B cell (primary cell): ENCODE measurements at regions of chr12 and their contacts with region 1.

Region 1: DNA sequence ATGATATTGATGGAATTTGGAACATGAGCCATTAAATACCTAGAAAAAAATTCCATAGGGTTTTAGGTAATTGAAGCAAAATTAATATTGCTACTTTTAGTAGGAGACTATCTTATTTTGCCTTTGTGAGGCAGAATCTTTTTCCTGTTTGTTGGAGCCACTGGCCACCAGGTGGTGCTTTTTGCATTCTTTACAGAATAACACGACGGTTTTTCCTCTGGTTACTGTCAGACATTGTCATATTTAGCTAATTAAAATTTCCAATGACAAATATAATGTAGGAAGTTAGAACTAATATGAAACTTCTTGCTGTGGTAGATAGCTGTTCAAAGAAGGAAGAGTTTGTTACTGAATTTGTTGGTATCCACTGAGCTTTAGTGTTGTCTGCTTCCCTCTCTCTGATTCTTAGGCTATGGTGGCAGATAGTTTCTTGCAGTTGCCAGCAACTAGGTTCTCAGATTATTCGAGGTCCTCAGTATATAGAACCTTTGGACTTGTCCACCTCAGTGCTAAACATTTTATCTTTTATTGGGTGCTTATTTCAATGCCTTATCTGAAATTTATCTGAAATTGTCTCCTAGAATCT is 25.7 kb downstream of the RAB21 start:
- DNase-seq: peak; percentile 60
- ATAC-seq: peak; percentile 28
- H3K4me3 ChIP-seq: no peak overlapping the region
- H3K4me3 Mint-ChIP-seq: no peak overlapping the region
- H3K27ac ChIP-seq: peak overlapping the region in 1 of 2 donors; percentile 49
- H3K27ac Mint-ChIP-seq: no peak overlapping the region
- H3K4me1 ChIP-seq: peaks cover 6 to 13% of the 10 kb centered on the region in 2 donors
- H3K4me1 Mint-ChIP-seq: peaks cover 13% of the 10 kb centered on the region
- H3K27me3 ChIP-seq: no peaks in the 10 kb centered on the region
- H3K27me3 Mint-ChIP-seq: no peaks in the 10 kb centered on the region
- CTCF ChIP-seq: peak; percentile 83

Region 2: DNA sequence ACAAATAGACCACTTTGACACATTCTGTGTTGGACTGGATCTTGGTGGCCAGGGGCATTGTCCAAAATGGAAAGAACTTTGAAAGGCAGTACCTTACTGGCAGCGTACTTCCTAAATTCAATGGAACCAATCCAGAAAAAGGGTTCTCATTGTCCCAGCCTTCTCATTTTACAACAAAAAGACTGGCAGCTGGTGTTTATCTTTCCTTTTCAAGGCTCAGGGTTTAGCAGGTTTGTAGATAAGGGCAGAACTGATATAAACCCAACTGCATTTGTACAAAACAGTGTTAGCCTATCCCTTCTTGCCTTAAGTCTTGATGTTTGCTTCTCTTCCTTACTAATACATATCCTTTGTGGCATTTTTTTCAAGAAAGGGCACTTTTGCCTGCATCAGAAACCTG is 108.5 kb before region 1 on chr12:
- CTCF ChIA-PET with region 1: no interaction called
- POLR2A ChIA-PET with region 1: no interaction called
- intact Hi-C with region 1: no loop called
- DNase-seq: no peak
- ATAC-seq: no peak
- H3K4me3 ChIP-seq: no peak overlapping the region
- H3K4me3 Mint-ChIP-seq: no peak overlapping the region
- H3K27ac ChIP-seq: no peak overlapping the region
- H3K27ac Mint-ChIP-seq: no peak overlapping the region
- H3K4me1 ChIP-seq: no peaks in the 10 kb centered on the region
- H3K4me1 Mint-ChIP-seq: peaks cover 9% of the 10 kb centered on the region
- H3K27me3 ChIP-seq: no peaks in the 10 kb centered on the region
- H3K27me3 Mint-ChIP-seq: no peaks in the 10 kb centered on the region
- CTCF ChIP-seq: no peak

Region 3: GRCh38 chr12:71791473-71792150 is 11.3 kb after region 1 on chr12:
- CTCF ChIA-PET with region 1: interaction called, 10 read pairs
- POLR2A ChIA-PET with region 1: no interaction called
- intact Hi-C with region 1: no loop called
- DNase-seq: no peak
- ATAC-seq: no peak
- H3K4me3 ChIP-seq: no peak overlapping the region
- H3K4me3 Mint-ChIP-seq: no peak overlapping the region
- H3K27ac ChIP-seq: no peak overlapping the region
- H3K27ac Mint-ChIP-seq: no peak overlapping the region
- H3K4me1 ChIP-seq: no peaks in the 10 kb centered on the region
- H3K4me1 Mint-ChIP-seq: peaks cover 6% of the 10 kb centered on the region
- H3K27me3 ChIP-seq: no peaks in the 10 kb centered on the region
- H3K27me3 Mint-ChIP-seq: no peaks in the 10 kb centered on the region
- CTCF ChIP-seq: no peak

Region 4: DNA sequence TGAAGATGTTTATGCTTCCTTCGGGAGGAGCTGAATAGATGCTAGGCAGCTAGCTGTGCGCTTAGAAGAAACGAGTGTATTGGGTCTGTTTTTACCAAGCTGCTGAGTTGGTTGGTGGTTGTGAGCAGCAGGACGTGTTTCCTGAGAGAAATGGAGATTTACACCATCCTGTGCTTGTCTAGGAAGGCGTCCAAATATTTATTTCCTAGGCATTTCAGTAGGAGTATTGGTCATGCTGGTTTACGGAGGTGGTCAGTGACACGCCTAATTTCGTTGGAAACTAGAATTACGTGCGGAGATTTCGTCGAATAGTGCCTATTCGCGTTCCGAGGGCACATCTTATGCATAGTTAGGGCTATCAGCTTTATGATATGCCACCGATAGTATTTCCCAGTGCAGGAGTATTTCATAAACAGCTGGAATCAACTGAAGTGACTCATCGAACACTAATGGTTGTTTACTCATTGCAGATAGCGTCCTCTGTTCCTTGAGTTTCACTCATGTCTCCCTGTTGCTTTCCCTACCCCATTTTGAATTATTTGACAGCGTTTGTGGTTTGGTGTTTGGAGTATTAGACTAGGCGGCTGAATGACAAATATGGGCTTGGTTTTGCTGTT is 60.0 kb after region 1 on chr12:
- CTCF ChIA-PET with region 1: interaction called, 22 read pairs
- POLR2A ChIA-PET with region 1: no interaction called
- intact Hi-C with region 1: no loop called
- DNase-seq: no peak
- ATAC-seq: no peak
- H3K4me3 ChIP-seq: peak overlapping the region; percentile 61 to 90 (median 80)
- H3K4me3 Mint-ChIP-seq: peak overlapping the region; percentile 94
- H3K27ac ChIP-seq: peak overlapping the region; percentile 99
- H3K27ac Mint-ChIP-seq: peak overlapping the region; percentile 95
- H3K4me1 ChIP-seq: peaks cover 21% of the 10 kb centered on the region in 2 donors
- H3K4me1 Mint-ChIP-seq: peaks cover 33% of the 10 kb centered on the region
- H3K27me3 ChIP-seq: no peaks in the 10 kb centered on the region
- H3K27me3 Mint-ChIP-seq: peaks cover 2% of the 10 kb centered on the region
- CTCF ChIP-seq: no peak

Region 5: GRCh38 chr12:71846322-71846940 is 66.1 kb after region 1 on chr12:
- CTCF ChIA-PET with region 1: interaction called, 27 read pairs
- POLR2A ChIA-PET with region 1: no interaction called
- intact Hi-C with region 1: loop called (anchors 1 kb)
- DNase-seq: peak; percentile 51
- ATAC-seq: no peak
- H3K4me3 ChIP-seq: no peak overlapping the region
- H3K4me3 Mint-ChIP-seq: no peak overlapping the region
- H3K27ac ChIP-seq: peak overlapping the region in 1 of 2 donors; percentile 14
- H3K27ac Mint-ChIP-seq: no peak overlapping the region
- H3K4me1 ChIP-seq: peaks cover 0 to under 1% of the 10 kb centered on the region in 2 donors
- H3K4me1 Mint-ChIP-seq: peaks cover 17% of the 10 kb centered on the region
- H3K27me3 ChIP-seq: no peaks in the 10 kb centered on the region
- H3K27me3 Mint-ChIP-seq: no peaks in the 10 kb centered on the region
- CTCF ChIP-seq: peak; percentile 73